GM10248 (cell line): ENCODE measurements at regions of chr6 and their contacts with region 1.

Region 1: DNA sequence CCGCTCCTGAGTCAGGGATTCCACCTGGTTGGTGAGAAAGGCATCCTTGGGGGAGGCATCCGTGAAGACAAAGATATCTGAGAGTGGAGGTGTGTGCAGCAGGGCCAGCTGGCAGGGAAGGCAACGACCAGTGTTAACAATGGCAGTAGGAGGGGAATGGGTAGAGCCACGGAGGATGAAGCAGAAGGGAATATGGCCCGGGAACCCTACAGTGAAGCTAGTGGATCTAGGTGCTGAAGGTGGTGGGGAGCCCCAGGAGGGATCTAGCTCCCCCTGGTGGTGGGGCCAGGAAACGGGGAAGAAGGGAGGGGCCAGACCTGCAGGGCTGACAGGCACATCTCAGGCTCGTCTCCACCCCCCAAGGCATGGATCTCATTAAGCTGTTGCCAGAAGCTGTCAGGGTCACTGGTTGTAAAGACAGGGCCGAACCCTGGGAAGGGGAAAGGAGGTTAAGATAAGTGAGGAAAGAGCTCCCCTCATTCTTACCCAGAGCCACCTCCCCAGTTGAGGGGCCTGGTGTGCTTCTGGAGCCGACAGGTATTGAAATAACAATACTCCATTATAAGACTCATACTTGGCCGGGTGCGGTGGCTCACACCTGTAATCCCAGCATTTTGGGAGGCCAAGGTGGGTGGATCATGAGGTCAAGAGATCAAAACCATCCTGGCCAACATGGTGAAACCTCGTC is 7.3 kb downstream of the VWA7 start:
- DNase-seq: peak; percentile 92
- CTCF ChIP-seq: peak; percentile 69

Region 2: GRCh38 chr6:31689249-31690110 is 80.3 kb before region 1 on chr6:
- CTCF ChIA-PET with region 1: interaction called, 26 read pairs
- POLR2A ChIA-PET with region 1: no interaction called
- DNase-seq: no peak
- CTCF ChIP-seq: no peak

Region 3: DNA sequence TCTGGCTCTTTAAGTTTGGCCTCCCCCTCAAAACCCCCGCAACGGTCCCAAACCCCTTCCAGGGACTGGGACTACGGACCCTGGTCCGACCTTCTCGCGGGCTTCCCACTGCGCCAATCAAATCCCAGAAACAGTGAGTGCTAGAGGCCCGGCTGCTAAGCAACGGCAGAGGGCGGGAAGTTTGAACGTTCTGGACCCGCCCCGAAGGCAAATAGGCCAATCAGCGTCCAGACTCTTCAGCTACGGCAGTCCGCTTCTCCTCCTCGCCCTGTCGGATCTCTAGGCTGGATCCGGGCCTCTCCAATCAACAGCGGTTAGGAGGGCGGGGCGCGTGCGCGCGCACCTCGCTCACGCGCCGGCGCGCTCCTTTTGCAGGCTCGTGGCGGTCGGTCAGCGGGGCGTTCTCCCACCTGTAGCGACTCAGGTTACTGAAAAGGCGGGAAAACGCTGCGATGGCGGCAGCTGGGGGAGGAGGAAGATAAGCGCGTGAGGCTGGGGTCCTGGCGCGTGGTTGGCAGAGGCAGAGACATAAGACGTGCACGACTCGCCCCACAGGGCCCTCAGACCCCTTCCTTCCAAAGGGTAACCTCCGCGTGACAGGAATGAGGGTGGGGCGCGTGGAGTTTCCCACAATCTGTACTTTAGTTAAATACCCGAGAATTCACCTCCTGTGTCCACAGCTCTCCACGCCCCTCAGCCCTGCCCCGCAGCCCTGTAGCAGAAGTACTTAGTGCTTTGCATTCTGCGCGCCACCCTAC is 30.0 kb before region 1 on chr6 and contains the start of gene MSH5:
- CTCF ChIA-PET with region 1: interaction called, 73 read pairs
- POLR2A ChIA-PET with region 1: interaction called, 3 read pairs
- DNase-seq: peak; percentile 97
- CTCF ChIP-seq: no peak

Region 4: GRCh38 chr6:31784098-31784925 is 14.5 kb after region 1 on chr6:
- CTCF ChIA-PET with region 1: interaction called, 41 read pairs
- POLR2A ChIA-PET with region 1: interaction called, 3 read pairs
- DNase-seq: no peak
- CTCF ChIP-seq: no peak

Region 5: DNA sequence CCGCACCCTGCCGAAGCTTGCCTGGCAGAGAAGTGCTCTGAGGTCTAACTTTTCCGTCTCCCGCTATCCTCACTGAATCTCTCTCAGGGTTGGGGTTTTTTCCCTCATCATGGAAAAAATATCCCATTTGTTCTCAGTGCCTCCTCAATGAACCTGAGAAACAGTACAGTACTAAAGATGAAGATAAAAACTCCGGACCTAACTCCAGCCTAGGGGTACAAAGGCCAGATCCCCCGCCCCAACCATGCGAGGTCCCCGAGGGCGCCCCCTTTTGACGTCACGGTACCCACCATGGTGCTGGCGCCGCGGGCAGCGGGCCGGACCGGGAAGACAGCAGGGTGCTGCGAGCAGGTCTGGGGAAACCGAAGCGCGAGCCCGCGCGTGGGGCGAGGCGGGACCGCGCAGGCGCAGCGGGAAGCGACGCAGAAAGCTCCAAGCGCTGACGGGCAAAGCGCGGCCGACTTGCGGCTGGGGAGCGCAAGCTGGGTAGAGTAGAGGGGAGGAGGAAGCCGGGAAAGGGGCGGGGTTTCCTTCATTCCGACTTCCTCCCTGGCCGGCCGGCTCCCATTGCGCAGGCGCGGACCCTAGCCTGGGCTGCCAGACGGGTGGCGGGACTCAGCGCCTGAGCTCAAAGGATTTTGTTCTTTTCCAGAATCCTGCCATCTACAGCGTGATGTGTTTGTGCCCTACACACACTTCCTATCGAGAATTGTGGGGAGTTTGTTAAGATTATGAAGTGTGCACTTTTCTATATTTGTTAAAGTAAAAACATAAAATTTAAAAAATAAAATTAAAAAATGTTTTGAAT is 36.8 kb after region 1 on chr6 and contains the start of gene LSM2:
- CTCF ChIA-PET with region 1: interaction called, 11 read pairs
- POLR2A ChIA-PET with region 1: no interaction called
- DNase-seq: peak; percentile 100
- CTCF ChIP-seq: peak; percentile 39

Region 6: GRCh38 chr6:32224696-32225095 is 454.9 kb after region 1 on chr6:
- CTCF ChIA-PET with region 1: no interaction called
- POLR2A ChIA-PET with region 1: no interaction called
- DNase-seq: no peak
- CTCF ChIP-seq: no peak